RWPE1 (cell line): ENCODE measurements at regions of chr5 and their contacts with region 1.

Region 1: DNA sequence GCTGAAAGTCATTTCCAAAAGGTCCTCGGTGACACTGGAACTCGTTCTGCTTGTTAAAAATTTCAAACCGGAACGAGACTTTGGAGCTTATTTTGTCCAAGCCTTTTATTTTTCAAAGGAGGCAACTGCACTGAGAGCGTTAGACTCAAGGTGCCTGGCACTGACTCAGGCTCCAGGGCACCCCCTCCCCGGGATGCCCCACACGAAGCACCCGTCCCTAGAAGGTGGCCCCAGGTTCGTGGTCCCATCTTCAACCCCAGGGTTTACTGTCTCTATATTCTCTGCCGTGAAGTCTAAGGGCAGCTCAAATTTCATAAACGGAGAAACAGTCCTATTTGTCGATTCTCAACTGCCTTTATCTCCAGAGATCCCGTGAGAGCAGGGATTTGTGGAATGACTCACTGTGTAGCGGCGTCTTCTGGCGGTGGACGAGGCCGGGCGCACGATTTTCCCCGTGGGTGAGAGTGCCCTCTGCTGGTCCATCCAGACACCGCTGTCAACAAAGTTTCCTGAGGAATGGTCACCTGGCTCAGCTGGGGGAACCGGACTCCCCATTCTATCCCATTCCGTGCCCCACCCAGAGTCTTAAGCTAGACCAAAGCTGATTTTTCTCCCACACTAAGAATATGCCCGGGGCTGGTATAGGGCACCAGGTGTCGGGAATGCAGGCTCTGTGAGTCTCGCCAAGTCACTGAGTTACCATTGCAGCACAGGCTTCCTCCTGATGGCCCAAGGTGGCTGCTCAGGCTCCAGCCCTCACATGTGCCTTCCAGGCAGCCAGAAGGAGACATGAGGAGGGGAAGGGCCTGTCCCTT is 27.1 kb upstream of the SLC6A19 start:
- DNase-seq: peak; percentile 86
- H3K27ac ChIP-seq: peak overlapping the region; percentile 68
- CTCF ChIP-seq: peak; percentile 95

Region 2: GRCh38 chr5:1161833-1162229 is 12.5 kb before region 1 on chr5:
- CTCF ChIA-PET with region 1: interaction called, 14 read pairs
- POLR2A ChIA-PET with region 1: no interaction called
- DNase-seq: peak; percentile 63
- H3K27ac ChIP-seq: peak overlapping the region; percentile 93
- CTCF ChIP-seq: no peak; the same call in 1 of the 2 replicates